ENCODE measurements at regions of chr6 and their contacts with region 1.

Region 1: GRCh38 chr6:87393022-87393622 is 14.7 kb upstream of the CFAP206 start:
- DNase-seq: peak; percentile 56
- H3K4me3 Mint-ChIP-seq: no peak overlapping the region
- H3K27ac Mint-ChIP-seq: no peak overlapping the region
- H3K4me1 Mint-ChIP-seq: no peaks in the 10 kb centered on the region
- H3K27me3 Mint-ChIP-seq: peaks cover 2% of the 10 kb centered on the region

Region 2: DNA sequence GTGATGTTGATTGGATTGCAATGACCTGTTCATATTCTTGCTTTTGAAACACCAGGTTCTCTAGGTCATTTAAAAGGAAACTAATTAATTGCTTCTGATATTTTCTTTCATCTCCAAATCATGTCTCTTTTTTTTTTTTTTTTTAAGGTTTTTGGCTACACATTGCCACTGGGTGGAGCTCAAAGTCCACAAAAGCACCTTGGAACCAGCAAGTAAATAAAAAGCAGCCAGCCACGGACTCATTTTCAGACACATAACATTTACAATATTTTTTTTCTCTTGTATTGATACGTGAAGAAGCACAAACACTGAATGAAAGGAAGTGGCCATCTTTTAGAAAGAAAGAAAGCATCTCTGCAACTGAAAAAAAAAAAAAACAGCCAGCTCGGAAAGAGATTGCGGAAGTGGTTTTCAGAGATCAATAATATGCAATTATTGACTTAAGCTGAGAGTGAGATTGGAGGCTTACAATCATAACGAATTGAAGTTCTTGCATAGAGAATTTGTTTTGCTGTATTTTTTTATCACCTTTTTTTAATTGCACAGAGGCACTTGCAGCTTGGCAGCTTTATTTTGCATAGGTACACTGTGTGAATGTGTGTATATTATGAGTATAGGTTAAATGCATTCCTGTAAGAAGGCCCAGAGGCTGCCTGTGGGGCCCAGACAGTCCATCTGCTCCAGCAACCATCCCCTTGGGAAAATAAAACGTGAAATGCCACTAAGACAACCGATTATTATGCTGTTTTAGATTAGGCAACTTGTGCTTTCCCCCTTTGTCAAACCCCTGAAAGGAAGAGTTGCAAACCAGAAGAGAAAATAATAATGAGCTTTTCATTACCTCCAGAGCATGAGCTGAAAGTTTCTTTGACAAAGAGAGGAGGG is 326.4 kb before region 1 on chr6:
- CTCF ChIA-PET with region 1: interaction called, 10 read pairs
- intact Hi-C with region 1: loop called (anchors 2 kb)
- DNase-seq: peak; percentile 67
- H3K4me3 Mint-ChIP-seq: no peak overlapping the region
- H3K27ac Mint-ChIP-seq: no peak overlapping the region
- H3K4me1 Mint-ChIP-seq: no peaks in the 10 kb centered on the region
- H3K27me3 Mint-ChIP-seq: peaks cover 8% of the 10 kb centered on the region

Region 3: DNA sequence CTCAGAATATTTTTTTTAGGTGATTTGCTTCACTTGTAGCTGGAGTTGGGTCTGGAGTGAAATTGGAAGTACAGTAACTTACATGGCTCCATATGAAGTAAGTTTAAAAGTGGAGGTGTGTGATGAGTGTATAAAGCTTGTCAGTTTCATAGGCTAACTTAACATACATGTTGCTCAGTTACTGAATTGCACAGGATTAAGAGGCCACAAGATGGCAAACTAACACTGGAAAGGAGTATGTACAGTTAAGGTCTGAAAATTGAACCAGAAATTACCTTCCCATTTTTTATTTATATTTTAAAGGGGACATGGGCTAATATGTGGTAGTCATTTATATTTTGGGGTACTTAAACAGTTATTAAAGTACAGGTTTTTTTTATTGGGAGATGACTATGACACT is 116.0 kb before region 1 on chr6:
- CTCF ChIA-PET with region 1: interaction called, 6 read pairs
- intact Hi-C with region 1: loop called (anchors 1 kb)
- DNase-seq: no peak
- H3K4me3 Mint-ChIP-seq: no peak overlapping the region
- H3K27ac Mint-ChIP-seq: no peak overlapping the region
- H3K4me1 Mint-ChIP-seq: peaks cover 11% of the 10 kb centered on the region
- H3K27me3 Mint-ChIP-seq: no peaks in the 10 kb centered on the region

Region 4: DNA sequence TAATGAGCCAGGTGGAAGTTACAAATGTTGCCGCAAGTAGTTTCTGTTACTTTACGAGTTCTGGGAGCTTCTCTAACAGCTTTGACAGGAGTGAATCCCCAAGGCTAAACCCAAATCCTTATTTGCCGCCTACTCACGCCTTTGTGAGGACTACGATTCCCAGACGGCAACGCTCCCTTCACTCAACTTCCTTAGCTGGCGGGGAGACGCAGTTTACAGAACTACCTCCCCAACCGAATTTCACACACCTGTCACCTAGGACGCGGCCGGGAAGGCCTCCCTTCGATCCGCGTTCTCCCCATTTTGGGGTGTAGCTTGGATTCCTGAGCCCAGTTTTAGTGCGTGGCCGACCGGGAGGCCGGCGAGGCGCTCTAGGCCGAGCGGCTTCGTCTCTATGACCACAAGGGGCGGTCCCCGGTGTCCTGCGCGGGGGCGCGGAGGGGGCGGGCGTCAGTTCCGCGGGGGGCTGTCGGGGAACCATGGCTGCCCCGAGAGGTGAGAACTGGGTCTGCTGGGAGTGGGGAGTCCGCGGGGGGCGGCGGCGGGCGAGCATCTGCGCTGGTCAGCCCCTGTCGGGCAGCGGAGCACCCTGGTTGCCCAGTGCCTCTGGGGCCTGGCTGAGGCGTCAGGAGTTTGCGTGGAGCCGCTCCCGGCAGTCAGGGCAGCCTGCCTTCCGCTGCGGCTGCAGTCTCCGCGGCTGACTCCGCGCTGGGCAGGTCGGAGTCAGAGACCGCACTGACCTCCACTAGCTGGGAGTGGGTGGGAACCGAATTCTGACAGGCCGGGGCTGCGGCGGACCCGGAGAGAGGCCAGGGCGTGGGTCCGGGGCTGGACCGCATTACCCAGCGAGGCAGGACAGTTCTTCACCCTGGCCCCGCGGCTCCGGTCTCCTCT is 79.7 kb after region 1 on chr6 and contains the start of gene SLC35A1:
- CTCF ChIA-PET with region 1: interaction called, 5 read pairs
- intact Hi-C with region 1: loop called (anchors 1 kb)
- DNase-seq: peak; percentile 80
- H3K4me3 Mint-ChIP-seq: peak within 1 kb of the TSS; percentile 95
- H3K27ac Mint-ChIP-seq: peak within 1 kb of the TSS; percentile 92
- H3K4me1 Mint-ChIP-seq: peaks cover 15% of the 10 kb centered on the region
- H3K27me3 Mint-ChIP-seq: peaks cover 4% of the 10 kb centered on the region
- total RNA-seq, gene SLC35A1: 6.7 to 6.8 TPM

Region 5: DNA sequence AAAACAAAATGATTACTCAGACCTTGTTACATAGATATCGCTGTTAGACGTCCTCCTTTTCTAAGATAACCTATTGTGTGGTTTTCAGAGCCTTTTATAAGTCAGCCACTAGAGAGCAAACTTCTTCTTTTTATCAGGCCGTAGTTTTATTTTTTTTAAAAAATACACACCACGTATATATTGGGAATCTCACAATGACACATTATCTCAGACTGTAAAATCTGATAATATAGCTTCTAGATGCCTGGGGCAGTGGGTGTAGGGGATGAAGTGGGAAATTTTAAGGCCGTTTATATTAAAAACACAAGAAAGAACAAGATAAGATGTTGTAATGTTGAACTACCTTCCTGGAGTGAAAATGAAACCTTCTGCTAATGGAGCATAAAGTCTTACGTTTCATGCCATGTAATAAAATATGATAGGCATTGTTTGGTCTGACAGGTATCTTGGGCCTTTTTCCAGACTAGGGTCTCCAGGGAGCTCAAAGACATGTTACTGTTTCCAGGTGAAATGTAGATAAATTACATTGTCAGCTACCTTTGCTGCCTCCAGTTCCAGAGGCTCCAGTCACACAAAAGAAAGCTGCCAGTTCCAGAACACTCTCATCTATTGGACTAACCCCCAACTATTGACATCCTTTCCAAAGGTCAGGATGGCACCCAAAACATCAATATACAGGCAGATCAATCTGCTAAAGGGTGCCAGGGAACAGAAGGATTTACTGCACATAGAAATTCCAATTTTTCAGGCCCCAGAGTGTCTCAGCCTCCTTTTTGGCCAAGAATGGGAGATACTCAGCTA is 439.1 kb after region 1 on chr6:
- CTCF ChIA-PET with region 1: no interaction called
- intact Hi-C with region 1: loop called (anchors 10 kb)
- DNase-seq: no peak
- H3K4me3 Mint-ChIP-seq: peak overlapping the region; percentile 69
- H3K27ac Mint-ChIP-seq: peak overlapping the region; percentile 72
- H3K4me1 Mint-ChIP-seq: peaks cover 8% of the 10 kb centered on the region
- H3K27me3 Mint-ChIP-seq: no peaks in the 10 kb centered on the region

Region 6: DNA sequence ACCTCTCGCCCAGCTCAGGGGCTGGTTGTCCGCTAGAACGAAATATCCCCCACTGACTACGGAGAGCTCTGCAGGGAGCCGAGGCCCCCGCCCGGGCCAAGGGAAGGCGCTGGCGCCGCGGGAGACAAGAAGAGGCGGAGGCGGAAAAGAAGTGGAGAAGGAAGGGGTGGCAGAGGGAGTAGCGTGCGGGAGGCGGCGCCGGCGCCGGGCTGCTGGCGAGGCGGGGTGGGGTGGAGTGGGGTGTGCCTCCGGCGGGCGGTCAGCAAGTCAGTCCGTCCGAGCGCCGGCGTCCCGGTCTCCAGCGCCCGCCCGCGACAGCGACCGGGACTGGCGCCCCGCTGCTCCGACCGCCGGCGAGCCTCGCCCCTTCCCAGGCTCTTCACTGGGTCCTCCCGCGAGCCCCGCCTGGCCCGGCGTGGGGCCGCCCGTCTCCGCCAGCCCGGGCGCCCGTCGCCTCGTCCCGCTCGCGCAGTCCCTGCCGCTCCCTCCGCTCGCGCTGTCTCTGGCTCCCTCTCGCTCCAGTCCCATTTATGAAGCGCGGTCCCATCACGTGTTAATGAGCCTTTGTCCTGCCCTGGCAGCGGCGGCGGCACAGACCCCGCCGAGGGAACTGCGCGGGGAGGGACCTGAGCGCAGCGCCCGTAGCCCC is 772.8 kb after region 1 on chr6 and contains the start of gene CNR1:
- CTCF ChIA-PET with region 1: no interaction called
- intact Hi-C with region 1: loop called (anchors 5 kb)
- DNase-seq: no peak
- H3K4me3 Mint-ChIP-seq: peak within 1 kb of the TSS; percentile 74
- H3K27ac Mint-ChIP-seq: no peak within 1 kb of the TSS
- H3K4me1 Mint-ChIP-seq: peaks cover 12% of the 10 kb centered on the region
- H3K27me3 Mint-ChIP-seq: peaks cover 55% of the 10 kb centered on the region
- total RNA-seq, gene CNR1: not detected

Region 7: GRCh38 chr6:88780714-88781389 is 1387.7 kb after region 1 on chr6:
- CTCF ChIA-PET with region 1: no interaction called
- intact Hi-C with region 1: loop called (anchors 1 kb)
- DNase-seq: peak; percentile 66
- H3K4me3 Mint-ChIP-seq: no peak overlapping the region
- H3K27ac Mint-ChIP-seq: no peak overlapping the region
- H3K4me1 Mint-ChIP-seq: peaks cover 5% of the 10 kb centered on the region
- H3K27me3 Mint-ChIP-seq: no peaks in the 10 kb centered on the region